Gastrocnemius medialis (tissue), 4 donors: ENCODE measurements at regions of chr2 and their contacts with region 1.

Region 1: GRCh38 chr2:71276311-71277146 is 49.6 kb upstream of the PAIP2B start:
- DNase-seq: peak; percentile 84 to 90
- ATAC-seq: peak; percentile 73
- H3K4me3 ChIP-seq: peak overlapping the region; percentile 67 to 80 (median 72)
- H3K27ac ChIP-seq: peak overlapping the region; percentile 90 to 96 (median 94)
- H3K4me1 ChIP-seq: peaks cover 28 to 33% of the 10 kb centered on the region in 2 donors
- H3K27me3 ChIP-seq: no peaks in the 10 kb centered on the region
- CTCF ChIP-seq: peak in 2 of 5 experiments; percentile 11 to 20
- POLR2A ChIP-seq: peak; percentile 96 to 99

Region 2: DNA sequence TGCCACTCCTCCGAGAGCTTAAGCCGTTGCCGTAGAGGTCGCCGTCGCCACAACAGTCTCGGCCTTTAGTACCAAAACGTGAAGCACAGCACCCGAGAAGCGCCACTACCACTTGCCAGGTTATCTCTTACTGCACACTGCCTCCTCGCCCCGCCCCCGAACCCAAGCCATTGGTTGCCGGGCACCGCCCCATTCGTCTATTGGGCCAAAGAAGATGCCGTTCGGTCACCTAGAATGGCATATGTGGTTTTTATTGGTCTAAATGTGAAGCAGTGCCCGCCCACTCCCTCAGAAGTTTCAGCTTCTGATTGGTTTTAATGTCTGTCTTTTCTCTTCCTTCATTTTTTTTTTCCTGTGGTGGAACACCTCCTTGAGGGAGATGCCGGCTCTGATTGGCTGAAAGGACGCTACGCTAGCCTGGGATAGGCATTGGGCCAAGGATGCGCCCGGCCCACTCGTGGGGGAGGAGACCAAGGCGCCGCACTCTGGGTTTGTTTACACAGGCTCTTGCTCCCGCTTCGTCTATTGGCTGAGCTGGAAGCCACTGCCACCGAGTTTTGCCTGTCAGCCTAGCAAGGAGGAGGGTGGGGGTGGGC is 49.5 kb before region 1 on chr2 and contains the start of gene PAIP2B:
- in situ Hi-C with region 1: no loop called
- intact Hi-C with region 1: loop called (anchors 1 kb)
- DNase-seq: peak; percentile 99 to 100
- ATAC-seq: peak; percentile 92 to 94
- H3K4me3 ChIP-seq: peak within 1 kb of the TSS; percentile 83 to 93 (median 90)
- H3K27ac ChIP-seq: peak within 1 kb of the TSS; percentile 96 to 98 (median 98)
- H3K4me1 ChIP-seq: peaks cover 19% of the 10 kb centered on the region in 2 donors
- H3K27me3 ChIP-seq: no peaks in the 10 kb centered on the region
- CTCF ChIP-seq: no peak
- POLR2A ChIP-seq: peak; percentile 95 to 97
- total RNA-seq, gene PAIP2B: 14.6 to 32.6 (median 15.9) TPM

Region 3: DNA sequence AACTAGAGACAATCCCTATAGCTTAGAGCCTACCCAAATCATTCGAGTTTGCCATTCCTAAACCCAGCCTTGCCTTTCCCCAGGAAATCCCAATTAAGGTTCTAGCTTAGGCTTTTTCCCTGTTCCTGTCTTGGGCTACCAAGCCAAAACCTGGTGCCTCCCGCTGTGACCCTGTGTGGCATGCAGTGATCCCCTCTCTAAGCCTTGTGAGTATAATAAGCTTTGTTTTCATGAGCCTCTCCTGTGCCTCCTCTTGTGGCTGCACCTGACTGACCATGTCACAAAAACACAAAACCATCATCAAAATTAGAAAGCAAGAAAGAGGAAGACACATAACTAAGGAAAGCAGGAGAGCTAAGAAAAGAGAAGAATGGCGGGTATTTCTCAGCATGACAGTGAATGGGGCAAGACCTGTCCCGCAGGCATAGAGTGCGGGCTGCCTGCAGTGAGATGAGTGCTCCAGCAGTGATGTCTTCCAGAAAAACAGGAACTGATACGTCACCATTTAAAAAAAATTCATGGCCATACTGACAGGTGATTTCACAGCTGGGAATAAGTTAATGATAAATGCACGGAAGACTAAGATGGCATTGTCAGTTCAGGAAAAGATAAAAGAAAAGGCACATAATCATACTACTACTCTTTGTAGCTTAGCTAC is 40.5 kb before region 1 on chr2:
- in situ Hi-C with region 1: loop called in 1 of 4 experiments (anchors 5 kb)
- intact Hi-C with region 1: no loop called
- DNase-seq: no peak
- ATAC-seq: no peak
- H3K4me3 ChIP-seq: no peak overlapping the region
- H3K27ac ChIP-seq: peak overlapping the region; percentile 77 to 87 (median 84)
- H3K4me1 ChIP-seq: peaks cover 45 to 46% of the 10 kb centered on the region in 2 donors
- H3K27me3 ChIP-seq: no peaks in the 10 kb centered on the region
- CTCF ChIP-seq: no peak
- POLR2A ChIP-seq: no peak

Region 4: GRCh38 chr2:71261534-71261933 is 15.0 kb before region 1 on chr2:
- in situ Hi-C with region 1: no loop called
- intact Hi-C with region 1: loop called (anchors 1 kb)
- DNase-seq: peak; percentile 83 to 89
- ATAC-seq: peak; percentile 100
- H3K4me3 ChIP-seq: no peak overlapping the region
- H3K27ac ChIP-seq: peak overlapping the region; percentile 51 to 80 (median 62)
- H3K4me1 ChIP-seq: peaks cover 7 to 9% of the 10 kb centered on the region in 2 donors
- H3K27me3 ChIP-seq: no peaks in the 10 kb centered on the region
- CTCF ChIP-seq: no peak
- POLR2A ChIP-seq: no peak

Region 5: GRCh38 chr2:71331581-71332434 is 55.3 kb after region 1 on chr2 and contains the start of gene ZNF638:
- in situ Hi-C with region 1: no loop called
- intact Hi-C with region 1: loop called (anchors 1 kb)
- DNase-seq: peak; percentile 85 to 92
- ATAC-seq: peak; percentile 91 to 94
- H3K4me3 ChIP-seq: peak within 1 kb of the TSS; percentile 81 to 98 (median 85)
- H3K27ac ChIP-seq: peak within 1 kb of the TSS; percentile 94 to 97 (median 95)
- H3K4me1 ChIP-seq: peaks cover 37 to 42% of the 10 kb centered on the region in 2 donors
- H3K27me3 ChIP-seq: no peaks in the 10 kb centered on the region
- CTCF ChIP-seq: peak; percentile 69 to 87 (median 85)
- POLR2A ChIP-seq: peak; percentile 87 to 95
- total RNA-seq, gene ZNF638: 69.7 to 152 (median 95.0) TPM